ENCODE measurements at regions of chr10 and their contacts with region 1.

Region 1: GRCh38 chr10:102660888-102661657 is 16.8 kb downstream of the TRIM8 start:
- DNase-seq: peak; percentile 41 to 75 (median 53)
- H3K4me3 ChIP-seq: peak overlapping the region; percentile 29
- H3K4me3 Mint-ChIP-seq: peak overlapping the region; percentile 3 to 80 (median 71)
- H3K27ac ChIP-seq: no peak overlapping the region
- H3K27ac Mint-ChIP-seq: peak overlapping the region; percentile 75 to 94 (median 84)
- H3K4me1 ChIP-seq: peaks cover 34% of the 10 kb centered on the region
- H3K4me1 Mint-ChIP-seq: peaks cover 27 to 42% (median 34%) of the 10 kb centered on the region in 3 donors
- H3K27me3 ChIP-seq: no peaks in the 10 kb centered on the region
- H3K27me3 Mint-ChIP-seq: no peaks in the 10 kb centered on the region

Region 2: GRCh38 chr10:102641880-102642735 is 19.0 kb before region 1 on chr10:
- CTCF ChIA-PET with region 1: interaction called, 10 read pairs
- POLR2A ChIA-PET with region 1: interaction called, 51 read pairs
- DNase-seq: peak; percentile 93 to 99 (median 97)
- H3K4me3 ChIP-seq: peak overlapping the region; percentile 73
- H3K4me3 Mint-ChIP-seq: peak overlapping the region; percentile 93 to 96 (median 94)
- H3K27ac ChIP-seq: peak overlapping the region; percentile 88
- H3K27ac Mint-ChIP-seq: peak overlapping the region; percentile 52 to 98 (median 98)
- H3K4me1 ChIP-seq: peaks cover 8% of the 10 kb centered on the region
- H3K4me1 Mint-ChIP-seq: peaks cover 18% of the 10 kb centered on the region in 3 donors
- H3K27me3 ChIP-seq: no peaks in the 10 kb centered on the region
- H3K27me3 Mint-ChIP-seq: peaks cover 0 to 2% of the 10 kb centered on the region in 2 donors

Measured in CD8-positive, alpha-beta memory T cell (primary cell).